PC-9 (cell line): ENCODE measurements at regions of chr4 and their contacts with region 1.

Region 1: DNA sequence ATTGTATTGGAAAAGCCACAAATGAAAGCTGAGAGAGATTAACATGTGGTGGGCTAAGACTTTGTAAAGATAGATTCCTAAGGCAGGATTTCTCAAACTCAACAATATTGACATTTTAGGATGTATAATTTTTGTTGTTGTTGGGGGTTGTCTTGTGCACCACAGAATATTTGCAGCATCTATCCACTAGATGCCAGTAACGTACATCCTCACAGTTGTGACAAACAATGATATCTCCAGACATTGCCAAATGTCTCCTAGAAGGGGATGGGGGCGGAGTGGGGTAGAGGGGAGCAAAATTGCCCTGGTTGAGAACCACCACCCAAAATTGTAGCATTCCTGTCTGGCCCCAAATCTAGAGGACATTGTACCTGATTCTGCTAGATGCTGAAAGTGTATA is 14.7 kb upstream of the CBR4 start:
- DNase-seq: peak; percentile 12 to 41
- H3K4me3 ChIP-seq: no peak overlapping the region
- H3K27ac ChIP-seq: no peak overlapping the region
- H3K4me1 ChIP-seq: 0 out of 2 replicates have a peak, but pooled peaks cover 6% of the 10 kb centered on the region
- H3K27me3 ChIP-seq: no peaks in the 10 kb centered on the region
- CTCF ChIP-seq: peak; percentile 68

Region 2: GRCh38 chr4:169115897-169116254 is 91.1 kb after region 1 on chr4:
- CTCF ChIA-PET with region 1: no interaction called
- POLR2A ChIA-PET with region 1: no interaction called
- intact Hi-C with region 1: loop called (anchors 5 kb)
- DNase-seq: peak; percentile 78 to 93
- H3K4me3 ChIP-seq: no peak overlapping the region
- H3K27ac ChIP-seq: peak overlapping the region; percentile 98
- H3K4me1 ChIP-seq: peaks cover 25% of the 10 kb centered on the region
- H3K27me3 ChIP-seq: no peaks in the 10 kb centered on the region
- CTCF ChIP-seq: peak; percentile 49; the same call in 1 of the 2 replicates

Region 3: DNA sequence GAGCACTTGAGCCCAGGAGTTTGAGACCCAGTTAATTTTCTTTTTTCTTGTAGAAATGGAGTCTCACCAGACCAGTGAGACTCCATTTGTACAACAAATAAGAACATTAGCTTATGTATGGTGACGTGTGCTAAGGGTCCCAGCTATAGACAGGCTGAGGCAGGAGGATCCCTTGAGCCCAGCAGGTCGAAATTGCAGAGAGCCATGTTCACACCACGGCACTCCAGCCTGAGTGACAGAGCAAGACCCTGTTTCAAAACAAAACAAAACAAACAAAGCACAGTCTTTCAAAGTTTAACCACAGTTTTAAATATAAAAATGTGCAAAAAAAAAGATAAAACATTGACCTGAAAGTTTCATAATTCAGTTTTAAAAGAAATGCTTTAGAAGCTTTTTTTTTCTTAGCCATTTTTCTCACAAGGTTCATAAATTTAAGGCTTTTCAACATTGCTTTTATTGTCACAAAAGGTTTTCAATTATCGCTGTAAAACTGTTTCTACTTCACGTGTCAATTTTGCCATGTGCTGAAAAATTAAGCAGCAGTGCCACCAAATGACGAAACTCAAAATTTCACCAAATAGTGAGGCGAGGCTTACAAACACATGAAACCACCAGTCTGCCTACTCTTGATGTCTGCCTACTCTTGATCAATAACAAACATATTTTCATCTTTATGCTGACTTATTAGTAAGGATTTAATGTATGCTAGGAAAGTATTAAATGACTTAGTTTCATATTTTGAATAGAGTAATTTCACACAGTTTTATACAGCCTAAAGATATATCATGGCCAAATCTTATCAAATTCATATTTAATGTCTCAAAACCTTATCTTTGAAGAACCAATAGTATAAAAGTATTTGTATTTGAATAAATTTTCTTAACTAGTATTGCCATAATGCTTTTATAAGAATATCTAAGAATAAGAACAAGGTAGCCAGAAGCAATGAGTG is 461.3 kb after region 1 on chr4:
- CTCF ChIA-PET with region 1: no interaction called
- POLR2A ChIA-PET with region 1: no interaction called
- intact Hi-C with region 1: loop called (anchors 1 kb)
- DNase-seq: peak; percentile 43 to 48
- H3K4me3 ChIP-seq: no peak overlapping the region
- H3K27ac ChIP-seq: no peak overlapping the region
- H3K4me1 ChIP-seq: peaks cover 4% of the 10 kb centered on the region; the same call in 1 of the 2 replicates
- H3K27me3 ChIP-seq: no peaks in the 10 kb centered on the region
- CTCF ChIP-seq: peak; percentile 68

Region 4: GRCh38 chr4:169530048-169530447 is 505.3 kb after region 1 on chr4:
- CTCF ChIA-PET with region 1: no interaction called
- POLR2A ChIA-PET with region 1: interaction called, 19 read pairs
- intact Hi-C with region 1: no loop called
- DNase-seq: no peak
- H3K4me3 ChIP-seq: no peak overlapping the region
- H3K27ac ChIP-seq: no peak overlapping the region
- H3K4me1 ChIP-seq: no peaks in the 10 kb centered on the region
- H3K27me3 ChIP-seq: no peaks in the 10 kb centered on the region
- CTCF ChIP-seq: no peak

Region 5: GRCh38 chr4:170610434-170610833 is 1585.7 kb after region 1 on chr4:
- CTCF ChIA-PET with region 1: no interaction called
- POLR2A ChIA-PET with region 1: no interaction called
- intact Hi-C with region 1: no loop called
- DNase-seq: no peak
- H3K4me3 ChIP-seq: no peak overlapping the region
- H3K27ac ChIP-seq: no peak overlapping the region
- H3K4me1 ChIP-seq: no peaks in the 10 kb centered on the region
- H3K27me3 ChIP-seq: no peaks in the 10 kb centered on the region
- CTCF ChIP-seq: no peak